ENCODE measurements at regions of chr11 and their contacts with region 1.

Region 1: DNA sequence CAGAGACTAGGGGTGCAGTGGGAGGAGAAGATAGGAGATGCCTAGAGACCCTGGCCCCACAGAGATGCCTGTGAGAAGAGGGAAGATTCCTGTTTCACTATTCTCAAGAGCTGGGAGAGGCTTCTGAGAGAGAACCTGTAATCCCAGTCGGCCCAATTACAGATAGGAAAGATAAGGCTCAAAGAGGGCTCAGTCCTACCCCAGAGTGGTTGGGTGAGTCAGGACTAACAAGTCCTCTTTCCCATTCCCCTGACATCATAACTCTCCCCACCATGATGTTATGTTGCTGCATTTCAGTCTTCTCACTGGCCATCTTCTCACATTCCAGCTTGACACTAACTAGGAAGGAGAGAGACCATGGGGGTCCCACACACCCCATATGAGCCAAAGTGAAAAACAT is 17.9 kb downstream of the ARHGEF12 start:
- DNase-seq: peak; percentile 12
- H3K4me3 ChIP-seq: no peak overlapping the region
- H3K27ac ChIP-seq: no peak overlapping the region
- H3K4me1 ChIP-seq: no peaks in the 10 kb centered on the region
- H3K27me3 ChIP-seq: no peaks in the 10 kb centered on the region
- CTCF ChIP-seq: no peak

Region 2: DNA sequence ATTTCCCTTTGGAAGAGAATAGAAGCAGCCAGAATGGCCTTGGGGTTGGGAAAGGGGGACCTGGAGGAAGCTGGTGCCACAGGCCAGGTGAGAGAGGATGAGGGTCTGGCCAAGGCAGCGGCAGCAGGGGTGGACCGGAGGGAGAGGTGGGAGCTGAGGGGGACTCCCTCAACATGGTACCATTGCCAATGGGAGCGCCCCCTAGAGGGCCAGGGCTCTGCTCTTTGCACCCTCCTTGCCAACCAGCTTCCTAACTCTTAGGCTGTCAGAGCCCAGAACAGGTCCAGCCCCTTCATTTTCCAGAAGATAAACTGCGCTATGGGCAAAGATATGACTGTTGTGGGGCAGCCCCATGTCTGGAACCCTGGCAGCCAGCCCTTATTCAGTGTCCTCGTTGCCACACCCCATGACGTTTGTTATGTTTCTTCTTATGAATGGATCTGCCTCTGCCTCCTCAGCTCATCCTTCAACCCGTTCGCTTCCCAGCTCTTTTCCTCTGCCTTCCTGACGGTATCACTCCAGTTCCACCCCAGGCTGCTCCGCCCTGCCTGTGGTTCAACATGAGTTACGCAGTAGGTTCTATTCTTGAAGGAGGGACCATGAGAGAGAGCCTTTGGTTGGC is 342.6 kb after region 1 on chr11:
- CTCF ChIA-PET with region 1: no interaction called
- dilution Hi-C with region 1: no loop called
- in situ Hi-C with region 1: loop called in 1 of 2 experiments (anchors 25 kb)
- intact Hi-C with region 1: no loop called
- DNase-seq: no peak
- H3K4me3 ChIP-seq: no peak overlapping the region
- H3K27ac ChIP-seq: no peak overlapping the region
- H3K4me1 ChIP-seq: no peaks in the 10 kb centered on the region
- H3K27me3 ChIP-seq: no peaks in the 10 kb centered on the region
- CTCF ChIP-seq: peak in 1 of 2 donors; percentile 7